Tibial artery (tissue), 4 donors: ENCODE measurements at regions of chr2 and their contacts with region 1.

Region 1: GRCh38 chr2:98149333-98149697 is 62.3 kb downstream of the VWA3B start:
- DNase-seq: peak in 1 of 2 donors; percentile 39
- H3K4me3 ChIP-seq: peak overlapping the region; percentile 38 to 41
- H3K27ac ChIP-seq: peak overlapping the region; percentile 28 to 68
- H3K4me1 ChIP-seq: peaks cover 0 to 44% (median 0%) of the 10 kb centered on the region in 4 donors
- H3K27me3 ChIP-seq: no peaks in the 10 kb centered on the region
- CTCF ChIP-seq: no peak

Region 2: DNA sequence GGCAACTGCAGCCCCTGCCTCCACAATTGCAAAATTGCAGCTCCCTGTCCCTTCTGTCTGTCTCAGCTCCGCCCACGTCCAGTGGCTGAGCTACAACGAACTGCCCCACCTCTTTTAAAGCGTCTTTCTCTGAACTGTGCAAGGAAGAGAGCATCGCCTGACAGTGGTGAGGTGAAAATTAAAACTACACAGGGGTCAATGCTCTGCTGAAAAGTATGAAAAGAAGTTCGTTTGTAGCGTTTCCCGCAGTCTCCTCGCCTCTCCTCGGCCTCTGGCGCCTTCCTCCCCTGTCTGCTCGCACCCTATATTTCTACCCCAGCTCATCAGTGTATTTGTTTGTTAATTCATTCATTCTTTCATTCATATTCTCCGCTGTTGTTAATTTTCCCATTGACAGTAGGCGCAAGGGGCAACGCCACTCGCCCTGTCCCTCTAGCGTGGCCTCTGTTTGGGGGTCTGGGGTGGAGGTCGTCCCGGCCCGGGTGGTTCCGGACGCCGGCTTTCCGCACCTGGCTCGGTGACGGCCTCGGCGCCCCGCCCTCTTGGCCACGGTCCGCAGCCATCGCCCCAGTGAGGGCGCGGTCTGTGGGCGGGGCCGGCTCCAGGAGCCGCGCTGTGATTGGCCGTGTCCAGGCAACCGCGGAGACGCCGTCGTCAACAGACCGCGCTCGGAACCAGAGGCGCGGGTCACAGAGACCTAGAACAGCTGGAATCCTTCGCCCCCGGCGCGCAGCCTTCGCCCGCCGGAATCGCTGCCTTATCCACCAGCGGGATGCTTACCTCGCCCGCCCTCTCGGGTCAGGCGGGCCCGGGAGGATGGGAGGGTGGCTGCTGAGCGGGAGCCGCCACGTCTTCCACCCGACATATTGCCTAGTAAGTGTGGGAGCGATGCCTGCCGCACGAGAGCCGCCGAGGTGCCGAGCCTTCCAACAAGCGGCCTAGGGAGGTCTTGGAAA is 62.5 kb before region 1 on chr2 and contains the start of gene VWA3B:
- intact Hi-C with region 1: loop called (anchors 10 kb)
- DNase-seq: peak in 1 of 2 donors; percentile 66
- H3K4me3 ChIP-seq: peak within 1 kb of the TSS; percentile 48 to 51
- H3K27ac ChIP-seq: peak within 1 kb of the TSS in 1 of 2 donors; percentile 15
- H3K4me1 ChIP-seq: peaks cover 0 to 16% (median 10%) of the 10 kb centered on the region in 4 donors
- H3K27me3 ChIP-seq: peaks cover 0 to 15% of the 10 kb centered on the region in 2 donors
- CTCF ChIP-seq: no peak

Region 3: DNA sequence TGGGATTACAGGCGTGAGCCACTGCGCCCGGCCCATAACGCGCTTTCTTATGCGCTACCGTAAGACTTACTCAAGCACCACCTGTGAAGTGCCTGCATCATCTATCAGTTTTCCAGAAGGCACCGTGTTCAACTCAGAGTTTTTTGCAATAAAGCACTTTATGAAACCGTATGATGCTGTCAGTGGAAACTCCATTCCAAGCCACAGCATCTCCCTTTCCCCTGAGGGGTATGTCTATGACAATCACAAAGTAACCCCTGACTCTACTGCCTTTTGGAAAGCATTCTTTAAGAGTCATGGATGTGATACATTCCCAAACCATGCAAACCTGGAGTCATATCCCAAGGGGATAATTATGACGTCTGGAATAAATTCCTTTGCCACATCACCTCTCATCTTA is 498.3 kb after region 1 on chr2:
- intact Hi-C with region 1: no loop called
- DNase-seq: no peak
- H3K4me3 ChIP-seq: no peak overlapping the region
- H3K27ac ChIP-seq: no peak overlapping the region
- H3K4me1 ChIP-seq: no peaks in the 10 kb centered on the region
- H3K27me3 ChIP-seq: no peaks in the 10 kb centered on the region
- CTCF ChIP-seq: no peak